Lower leg skin (tissue), 4 donors: ENCODE measurements at regions of chr18 and their contacts with region 1.

Region 1: GRCh38 chr18:31563778-31564177 is 27.9 kb upstream of the TTR start:
- DNase-seq: no peak
- H3K4me3 ChIP-seq: no peak overlapping the region
- CTCF ChIP-seq: no peak
- POLR2A ChIP-seq: no peak

Region 2: GRCh38 chr18:31819106-31819924 is 255.5 kb after region 1 on chr18:
- intact Hi-C with region 1: loop called (anchors 10 kb)
- DNase-seq: no peak
- H3K4me3 ChIP-seq: no peak overlapping the region
- CTCF ChIP-seq: no peak
- POLR2A ChIP-seq: no peak